ENCODE measurements at regions of chr3 and their contacts with region 1.

Region 1: DNA sequence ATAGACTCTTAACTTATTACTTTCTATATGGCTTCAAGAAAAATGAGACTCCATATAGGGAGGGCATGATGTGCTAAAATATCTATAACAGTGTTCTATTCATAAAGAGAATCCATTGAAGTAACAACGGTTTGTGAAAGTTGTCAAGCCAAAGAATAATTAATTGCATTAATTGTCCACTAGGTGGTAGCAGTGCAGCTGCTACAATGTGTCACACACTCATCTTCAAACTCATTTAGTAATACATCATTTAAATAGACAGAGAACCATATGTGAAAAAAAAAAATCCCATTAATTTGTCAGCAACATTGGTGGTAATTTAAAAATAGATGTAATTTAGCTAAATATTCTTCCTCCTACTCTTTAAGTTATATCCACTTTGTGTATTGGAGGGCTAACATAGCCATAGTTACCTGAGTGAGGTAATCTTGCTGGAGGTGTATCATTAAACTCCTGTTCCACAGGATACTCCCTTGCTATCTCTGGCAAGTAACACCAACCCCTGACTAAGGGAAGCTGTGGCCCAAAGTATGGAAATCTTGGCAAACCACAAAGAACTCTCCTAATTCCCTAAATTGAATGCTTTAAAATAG is 3.7 kb upstream of the CPA3 start:
- DNase-seq: peak; percentile 9
- H3K4me3 ChIP-seq: no peak overlapping the region
- CTCF ChIP-seq: peak; percentile 21

Region 2: DNA sequence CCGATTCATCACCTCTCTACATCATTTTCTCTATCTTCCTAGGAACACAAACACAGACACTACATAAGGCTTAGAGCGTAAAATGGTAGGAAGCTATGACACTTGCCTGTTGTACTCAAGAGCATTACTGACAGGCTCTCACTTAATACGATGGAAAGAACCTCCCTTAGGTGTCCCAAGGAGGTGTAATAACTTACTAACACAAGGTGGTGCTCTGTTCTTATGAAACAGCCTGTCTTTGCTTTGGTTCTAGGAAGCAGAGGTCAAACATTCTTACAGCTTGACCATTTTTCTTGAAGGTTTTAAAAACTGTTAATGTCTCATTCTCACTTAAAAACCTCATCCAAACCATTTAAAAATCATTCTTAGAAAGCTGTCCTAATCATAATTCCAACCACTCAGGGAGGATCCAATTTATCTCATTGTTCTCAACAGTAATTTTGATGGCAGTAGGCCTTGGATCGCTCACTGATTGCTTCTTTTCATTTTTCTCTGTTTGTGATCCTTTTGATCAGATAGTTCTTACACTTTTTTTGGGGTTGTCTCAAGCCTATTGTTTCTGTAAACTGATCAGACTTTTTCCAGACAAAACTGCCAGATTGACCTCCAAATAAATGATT is 481.5 kb before region 1 on chr3:
- CTCF ChIA-PET with region 1: interaction called, 35 read pairs
- POLR2A ChIA-PET with region 1: no interaction called
- DNase-seq: peak; percentile 14
- H3K4me3 ChIP-seq: no peak overlapping the region
- CTCF ChIP-seq: peak; percentile 48

Region 3: GRCh38 chr3:148500881-148501280 is 360.5 kb before region 1 on chr3:
- CTCF ChIA-PET with region 1: no interaction called
- POLR2A ChIA-PET with region 1: no interaction called
- DNase-seq: no peak
- H3K4me3 ChIP-seq: no peak overlapping the region
- CTCF ChIP-seq: no peak

Region 4: DNA sequence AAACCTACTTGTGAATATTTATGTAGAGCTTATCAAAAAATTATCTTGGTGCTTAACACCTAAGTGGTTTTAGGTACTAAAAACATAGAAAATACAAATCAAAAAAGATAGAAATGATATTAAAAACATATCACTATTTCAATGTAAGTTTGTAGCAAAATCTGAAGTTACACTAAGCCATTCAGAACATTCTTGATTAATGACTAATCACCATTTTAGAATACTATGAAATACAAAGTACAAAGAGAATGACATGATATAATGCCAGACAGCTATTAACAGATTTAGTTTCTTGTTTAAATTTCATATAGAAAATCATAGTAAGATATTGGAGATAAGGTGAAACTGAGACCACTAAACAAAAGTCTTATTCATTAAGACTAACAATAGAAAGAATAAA is 333.3 kb before region 1 on chr3:
- CTCF ChIA-PET with region 1: no interaction called
- POLR2A ChIA-PET with region 1: no interaction called
- DNase-seq: no peak
- H3K4me3 ChIP-seq: no peak overlapping the region
- CTCF ChIP-seq: no peak

Region 5: GRCh38 chr3:148873270-148873926 is 12.0 kb after region 1 on chr3:
- CTCF ChIA-PET with region 1: interaction called, 10 read pairs
- POLR2A ChIA-PET with region 1: no interaction called
- DNase-seq: no peak
- H3K4me3 ChIP-seq: no peak overlapping the region
- CTCF ChIP-seq: no peak

Region 6: DNA sequence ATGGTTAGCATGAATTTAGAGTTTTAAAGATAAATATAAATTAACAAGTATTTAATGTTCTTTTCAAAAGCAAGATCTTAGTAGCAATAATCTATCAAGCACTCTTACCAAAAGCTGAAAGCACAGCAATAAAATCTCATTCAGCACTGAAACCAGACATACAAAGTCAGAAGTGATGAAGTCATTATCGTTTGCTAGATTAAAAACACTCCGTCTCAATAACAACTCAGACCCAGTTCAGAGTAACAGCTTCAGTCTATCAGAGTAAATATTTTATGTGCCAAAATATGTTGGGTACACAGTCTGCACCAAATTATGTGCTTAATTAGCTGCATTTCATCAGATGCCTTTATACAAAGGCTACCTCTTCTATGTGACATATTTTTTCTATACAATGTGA is 45.3 kb after region 1 on chr3:
- CTCF ChIA-PET with region 1: interaction called, 14 read pairs
- POLR2A ChIA-PET with region 1: no interaction called
- DNase-seq: no peak
- H3K4me3 ChIP-seq: no peak overlapping the region
- CTCF ChIP-seq: no peak

Region 7: DNA sequence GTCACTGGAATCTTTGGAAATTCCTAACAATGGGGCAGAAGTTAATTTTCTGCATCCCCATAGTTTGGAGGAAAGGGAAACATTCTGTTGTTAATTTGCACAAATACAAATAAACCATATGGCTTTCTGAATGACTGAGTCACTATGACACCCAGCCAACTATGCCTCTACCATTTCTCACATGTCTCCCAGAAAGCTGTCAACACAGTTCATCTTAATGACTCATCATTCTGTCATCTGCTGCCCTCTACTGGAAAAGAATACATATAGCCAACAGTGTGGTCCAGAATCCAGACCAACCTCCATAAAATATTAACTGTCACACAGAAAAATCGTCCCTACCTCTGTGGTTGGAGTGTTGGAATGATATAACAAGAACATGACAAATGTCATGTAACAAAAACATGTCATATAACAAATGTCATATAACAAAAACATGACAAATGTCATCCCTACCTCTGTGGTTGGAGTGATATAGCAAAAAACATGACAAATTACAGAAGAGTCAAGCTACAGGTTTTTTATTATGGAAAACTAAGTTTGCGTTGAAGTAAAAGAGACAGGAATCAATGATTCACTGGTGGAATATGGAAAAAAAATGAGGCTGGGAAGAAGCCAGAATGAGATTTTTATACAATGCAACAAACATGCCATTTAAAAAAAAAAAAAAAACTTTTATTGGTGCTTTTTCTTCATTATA is 82.3 kb after region 1 on chr3:
- CTCF ChIA-PET with region 1: interaction called, 614 read pairs
- POLR2A ChIA-PET with region 1: interaction called, 3 read pairs
- DNase-seq: peak; percentile 69
- H3K4me3 ChIP-seq: no peak overlapping the region
- CTCF ChIP-seq: peak; percentile 50

Measured in AG04449 (cell line).